Left ventricle myocardium superior (tissue), 1 donor: ENCODE measurements at regions of chr3 and their contacts with region 1.

Region 1: GRCh38 chr3:66971891-66972551 is 26.1 kb upstream of the KBTBD8 start:
- DNase-seq: peak; percentile 73
- ATAC-seq: peak; percentile 99

Region 2: DNA sequence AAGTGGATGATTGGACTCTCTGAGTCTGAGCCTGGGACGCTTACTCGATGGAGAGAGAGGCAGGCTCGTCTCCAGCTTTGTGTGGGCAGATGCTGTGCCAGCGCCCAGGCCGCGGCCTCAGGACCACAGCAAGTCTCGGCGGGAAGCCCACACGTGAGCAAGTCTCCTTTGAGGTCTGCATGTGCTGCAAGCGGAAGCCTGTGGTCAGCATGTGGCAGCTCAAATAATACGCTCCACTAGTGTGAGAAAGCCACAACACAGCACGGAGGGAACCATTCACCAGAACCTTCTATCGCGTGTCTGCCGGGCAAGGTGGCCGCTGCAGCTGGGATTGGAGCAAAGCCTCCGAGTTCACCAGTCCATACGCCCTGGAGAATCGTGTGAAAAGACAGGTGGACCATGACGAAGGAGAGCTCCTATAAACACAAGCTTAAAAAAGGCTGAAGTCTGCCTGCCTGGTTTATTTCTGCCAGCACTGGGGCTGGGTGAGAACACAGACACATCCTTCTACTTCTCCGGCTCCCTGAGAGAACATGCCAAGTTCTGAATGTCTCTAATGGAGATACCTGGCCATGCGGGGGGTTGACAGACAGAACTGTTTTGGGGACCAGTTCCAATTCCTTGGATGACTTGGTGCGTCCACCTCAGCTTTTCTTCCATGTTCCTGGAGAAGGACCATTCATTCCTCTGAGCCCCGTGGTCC is 389.1 kb before region 1 on chr3:
- intact Hi-C with region 1: no loop called
- DNase-seq: no peak
- ATAC-seq: no peak

Region 3: DNA sequence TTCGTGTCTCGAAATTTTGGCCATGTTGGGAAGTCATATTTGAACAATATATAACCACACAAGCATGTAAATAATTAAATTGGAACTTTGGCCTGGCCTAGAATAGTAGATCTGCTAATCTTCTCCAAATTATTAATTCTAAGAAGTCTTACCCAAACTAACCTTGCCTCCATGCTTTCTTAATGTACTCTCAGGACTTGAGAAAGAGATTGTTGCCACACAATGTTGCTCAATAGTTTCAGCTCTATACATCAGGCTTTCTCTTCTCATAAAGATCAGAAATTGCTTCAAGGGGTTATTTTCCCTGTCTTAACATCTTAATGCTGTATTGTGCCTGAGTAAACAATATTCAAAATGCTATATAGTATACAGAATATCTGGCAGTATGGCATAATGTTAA is 268.5 kb before region 1 on chr3:
- intact Hi-C with region 1: no loop called
- DNase-seq: no peak
- ATAC-seq: no peak

Region 4: GRCh38 chr3:66923969-66924368 is 48.1 kb before region 1 on chr3:
- intact Hi-C with region 1: no loop called
- DNase-seq: no peak
- ATAC-seq: no peak

Region 5: DNA sequence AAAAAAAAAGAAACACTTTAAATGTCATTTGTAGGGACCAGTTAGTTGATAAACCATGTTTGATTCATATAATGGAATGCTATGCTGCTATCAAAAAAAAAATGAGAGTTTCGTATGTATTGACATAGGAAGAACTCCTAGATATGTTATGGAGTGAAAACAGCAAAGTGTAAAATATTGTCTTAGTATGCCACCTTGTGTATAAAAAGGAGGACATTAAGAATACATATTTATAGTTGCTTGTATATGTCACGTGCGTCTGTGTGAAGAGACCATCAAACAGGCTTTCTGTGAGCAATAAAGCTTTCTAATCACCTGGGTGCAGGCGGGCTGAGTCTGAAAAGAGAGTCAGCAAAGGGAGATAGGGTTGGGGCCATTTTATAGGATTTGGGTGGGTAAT is 65.6 kb after region 1 on chr3:
- intact Hi-C with region 1: loop called (anchors 5 kb)
- DNase-seq: no peak
- ATAC-seq: peak; percentile 56